Endothelial cell of umbilical vein (primary cell): ENCODE measurements at regions of chr4 and their contacts with region 1.

Region 1: DNA sequence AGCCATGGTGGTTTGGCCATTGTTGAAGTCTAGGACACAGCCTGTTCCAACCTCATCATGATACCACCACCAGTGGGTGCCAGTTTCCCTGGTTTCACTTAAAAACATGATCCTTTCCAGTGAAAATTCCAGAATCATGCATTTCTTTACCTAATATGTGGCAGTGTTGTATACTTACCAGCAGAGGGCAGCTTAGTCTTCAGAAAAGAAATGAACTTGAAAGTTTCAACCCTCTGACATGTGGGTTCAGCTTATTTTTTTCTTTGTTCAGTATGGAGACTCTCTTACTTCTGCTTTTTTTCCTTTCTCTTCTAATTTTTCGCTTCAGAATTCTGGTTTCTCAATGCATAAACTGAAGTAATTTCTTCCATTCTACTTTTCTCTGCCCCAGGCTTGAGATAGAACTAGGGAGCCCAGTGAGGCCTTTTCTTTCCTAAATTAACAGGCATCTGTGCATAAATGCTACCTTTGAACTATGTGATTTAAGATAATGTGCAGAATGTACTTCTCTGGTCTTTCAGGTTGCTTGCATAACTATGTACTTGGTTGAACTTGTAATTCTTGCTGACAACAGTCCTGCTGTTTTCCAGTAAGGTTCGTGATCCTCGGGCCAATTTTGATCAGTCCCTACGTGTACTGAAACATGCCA is 10.7 kb downstream of the LIAS start:
- DNase-seq: peak; percentile 92
- H3K4me3 ChIP-seq: no peak overlapping the region
- H3K27ac ChIP-seq: peak overlapping the region; percentile 26
- H3K4me1 ChIP-seq: peaks cover 3% of the 10 kb centered on the region
- H3K27me3 ChIP-seq: no peaks in the 10 kb centered on the region
- CTCF ChIP-seq: peak; percentile 77 to 84
- POLR2A ChIP-seq: no peak

Region 2: GRCh38 chr4:39458505-39459300 is 10.8 kb before region 1 on chr4 and contains the starts of genes LIAS and RPL9:
- CTCF ChIA-PET with region 1: interaction called, 11 read pairs
- POLR2A ChIA-PET with region 1: interaction called, 8 read pairs
- dilution Hi-C with region 1: no loop called
- intact Hi-C with region 1: no loop called
- DNase-seq: peak; percentile 99
- H3K4me3 ChIP-seq: peak within 1 kb of the TSS; percentile 55 to 99 (median 93)
- H3K27ac ChIP-seq: peak within 1 kb of the TSS; percentile 83
- H3K4me1 ChIP-seq: peaks cover 26% of the 10 kb centered on the region
- H3K27me3 ChIP-seq: no peaks in the 10 kb centered on the region
- CTCF ChIP-seq: no peak
- POLR2A ChIP-seq: peak; percentile 98
- total RNA-seq, gene LIAS: 9.7 and 11.3 TPM in 2 replicates
- total RNA-seq, gene RPL9: 963 and 988 TPM in 2 replicates

Region 3: DNA sequence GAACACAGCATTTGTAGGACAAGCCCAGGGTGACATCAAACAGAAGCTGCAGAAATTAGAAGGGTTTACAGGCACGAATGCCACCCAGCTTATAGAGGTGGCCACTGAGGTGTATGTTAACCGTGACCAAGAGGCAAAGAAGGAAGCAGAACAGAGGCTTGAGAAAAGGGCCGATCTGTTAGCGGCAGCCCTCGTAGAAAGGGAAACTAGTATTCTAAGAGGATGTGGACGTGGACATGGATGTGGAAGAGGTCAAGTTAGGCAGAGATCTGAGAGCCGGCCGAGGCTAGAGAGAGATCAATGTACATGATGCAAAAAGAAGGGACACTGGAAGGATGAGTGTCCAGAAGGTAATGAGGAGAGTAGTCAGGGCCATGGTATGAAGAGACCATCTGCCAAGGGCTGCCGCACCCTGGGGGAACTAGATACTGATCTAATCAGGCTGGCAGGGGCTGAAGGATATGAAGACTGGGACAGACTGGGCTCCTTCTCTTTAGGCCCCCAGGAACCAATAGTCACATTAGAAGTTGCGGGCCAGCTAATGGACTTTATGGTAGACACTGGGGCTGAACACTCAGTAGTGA is 16.8 kb after region 1 on chr4:
- CTCF ChIA-PET with region 1: interaction called, 15 read pairs
- POLR2A ChIA-PET with region 1: no interaction called
- dilution Hi-C with region 1: no loop called
- intact Hi-C with region 1: no loop called
- DNase-seq: no peak
- H3K4me3 ChIP-seq: no peak overlapping the region
- H3K27ac ChIP-seq: no peak overlapping the region
- H3K4me1 ChIP-seq: no peaks in the 10 kb centered on the region
- H3K27me3 ChIP-seq: no peaks in the 10 kb centered on the region
- CTCF ChIP-seq: no peak
- POLR2A ChIP-seq: no peak

Region 4: DNA sequence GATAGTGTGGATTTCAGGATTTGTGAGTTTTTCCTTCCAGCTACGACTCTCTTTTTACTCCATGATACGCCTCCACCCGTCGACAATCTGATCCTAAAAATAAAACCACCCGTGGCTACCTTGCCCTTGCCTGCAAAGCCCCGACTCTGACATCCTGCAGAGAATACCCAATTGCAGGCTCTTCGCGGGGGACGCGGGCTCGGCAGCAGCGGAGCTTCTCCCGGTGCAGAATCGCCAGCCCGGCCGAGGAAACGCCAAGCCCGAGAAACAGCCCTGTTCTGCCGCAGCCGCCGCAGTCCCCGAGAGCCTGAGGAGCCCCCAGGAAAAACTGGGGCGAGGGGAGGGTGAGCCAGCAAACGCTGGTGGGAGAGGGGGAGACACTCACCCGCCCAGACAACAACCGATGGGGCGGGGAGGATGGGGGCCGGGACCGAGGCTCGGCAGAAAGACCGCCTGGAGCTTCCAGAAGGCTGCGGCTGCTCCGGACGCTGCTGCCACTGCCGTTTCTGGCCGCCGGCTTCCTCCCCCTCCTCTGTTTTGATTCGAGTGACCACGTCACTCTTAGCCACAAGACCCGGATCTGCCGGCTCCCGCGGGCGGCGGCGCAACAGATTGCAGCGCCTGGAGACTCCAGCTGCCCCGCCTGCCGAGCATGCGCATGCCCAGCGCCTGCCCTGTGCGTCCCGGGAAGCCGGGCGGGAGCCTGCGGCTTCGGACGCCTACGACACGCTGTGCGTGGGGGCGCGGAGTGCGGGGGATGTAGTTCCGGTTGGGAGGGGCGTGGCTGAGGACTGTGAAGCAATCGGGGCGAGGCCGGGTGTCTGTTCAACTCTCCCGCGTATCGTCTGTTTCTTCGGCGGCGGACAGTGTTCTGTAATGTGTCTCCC is 169.0 kb after region 1 on chr4 and contains the start of gene SMIM14:
- CTCF ChIA-PET with region 1: interaction called, 24 read pairs
- POLR2A ChIA-PET with region 1: interaction called, 3 read pairs
- dilution Hi-C with region 1: no loop called
- intact Hi-C with region 1: loop called (anchors 1 kb)
- DNase-seq: peak; percentile 98
- H3K4me3 ChIP-seq: peak within 1 kb of the TSS; percentile 66 to 97 (median 69)
- H3K27ac ChIP-seq: peak within 1 kb of the TSS; percentile 89
- H3K4me1 ChIP-seq: peaks cover 9% of the 10 kb centered on the region
- H3K27me3 ChIP-seq: no peaks in the 10 kb centered on the region
- CTCF ChIP-seq: peak in 1 of 2 donors; percentile 7
- POLR2A ChIP-seq: peak; percentile 94
- total RNA-seq, gene SMIM14: 15.1 and 15.4 TPM in 2 replicates

Region 5: GRCh38 chr4:39697740-39698423 is 228.3 kb after region 1 on chr4 and contains the start of gene UBE2K:
- CTCF ChIA-PET with region 1: interaction called, 7 read pairs
- POLR2A ChIA-PET with region 1: no interaction called
- dilution Hi-C with region 1: no loop called
- intact Hi-C with region 1: loop called (anchors 2 kb)
- DNase-seq: peak; percentile 81
- H3K4me3 ChIP-seq: peak within 1 kb of the TSS; percentile 39 to 97 (median 90)
- H3K27ac ChIP-seq: peak within 1 kb of the TSS; percentile 80
- H3K4me1 ChIP-seq: peaks cover 21% of the 10 kb centered on the region
- H3K27me3 ChIP-seq: no peaks in the 10 kb centered on the region
- CTCF ChIP-seq: no peak
- POLR2A ChIP-seq: peak; percentile 84
- total RNA-seq, gene UBE2K: 90.3 and 97.8 TPM in 2 replicates